ENCODE measurements at regions of chr1 and their contacts with region 1.

Region 1: DNA sequence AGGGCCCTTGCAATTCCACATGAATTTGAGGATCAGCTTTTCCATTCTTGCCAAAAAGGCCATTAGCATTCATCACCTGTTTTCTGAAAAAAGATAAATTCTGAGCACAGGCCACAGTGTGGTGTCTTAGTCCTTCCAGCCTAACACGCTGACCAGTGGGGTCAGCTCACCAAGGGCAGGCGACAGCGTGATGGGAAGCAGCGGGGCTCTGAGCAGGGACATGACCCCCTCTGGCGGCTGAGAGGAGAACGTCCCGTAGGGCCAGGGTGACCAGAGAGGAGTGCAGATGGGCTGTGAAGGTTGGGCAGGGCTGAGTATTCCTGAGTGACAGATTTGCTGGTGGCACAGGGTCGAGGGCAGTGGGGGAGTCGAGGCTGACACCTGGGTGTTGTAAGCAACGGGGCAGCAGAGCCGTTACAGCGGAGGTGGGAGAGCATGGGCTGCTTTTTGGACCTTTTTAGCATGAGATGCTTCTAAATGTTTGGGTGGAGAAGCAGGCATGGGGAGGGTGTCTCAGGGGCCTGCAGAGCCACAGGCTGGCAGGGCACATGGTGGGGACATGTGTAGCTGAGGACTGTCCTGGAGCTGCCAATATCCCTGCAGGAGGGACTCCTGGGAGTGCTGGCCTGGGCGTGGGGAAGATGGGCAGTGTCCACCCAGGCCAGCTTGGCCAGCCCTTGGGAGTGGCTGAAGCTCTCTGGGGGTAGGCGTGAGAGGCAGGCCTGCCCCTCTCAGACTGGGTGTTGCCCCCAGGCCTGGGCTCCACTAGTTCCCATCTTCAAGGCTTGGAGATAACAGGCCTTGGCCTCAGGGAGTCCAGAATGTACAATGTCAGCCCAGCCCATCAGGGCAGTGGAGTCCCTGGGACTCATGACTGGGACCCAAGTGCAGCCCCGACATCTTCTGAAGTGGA is 8.6 kb upstream of the CALML6 start:
- DNase-seq: peak; percentile 47 to 65 (median 58)
- H3K4me3 ChIP-seq: no peak overlapping the region
- H3K27ac ChIP-seq: no peak overlapping the region
- H3K4me1 ChIP-seq: peaks cover 0 to 35% (median 28%) of the 10 kb centered on the region in 4 experiments
- H3K27me3 ChIP-seq: no peaks in the 10 kb centered on the region

Region 2: GRCh38 chr1:1788646-1789431 is 117.6 kb before region 1 on chr1:
- CTCF ChIA-PET with region 1: interaction called, 15 read pairs
- POLR2A ChIA-PET with region 1: no interaction called
- DNase-seq: peak; percentile 32 to 55 (median 43)
- H3K4me3 ChIP-seq: no peak overlapping the region
- H3K27ac ChIP-seq: no peak overlapping the region
- H3K4me1 ChIP-seq: no peaks in the 10 kb centered on the region
- H3K27me3 ChIP-seq: no peaks in the 10 kb centered on the region

Region 3: DNA sequence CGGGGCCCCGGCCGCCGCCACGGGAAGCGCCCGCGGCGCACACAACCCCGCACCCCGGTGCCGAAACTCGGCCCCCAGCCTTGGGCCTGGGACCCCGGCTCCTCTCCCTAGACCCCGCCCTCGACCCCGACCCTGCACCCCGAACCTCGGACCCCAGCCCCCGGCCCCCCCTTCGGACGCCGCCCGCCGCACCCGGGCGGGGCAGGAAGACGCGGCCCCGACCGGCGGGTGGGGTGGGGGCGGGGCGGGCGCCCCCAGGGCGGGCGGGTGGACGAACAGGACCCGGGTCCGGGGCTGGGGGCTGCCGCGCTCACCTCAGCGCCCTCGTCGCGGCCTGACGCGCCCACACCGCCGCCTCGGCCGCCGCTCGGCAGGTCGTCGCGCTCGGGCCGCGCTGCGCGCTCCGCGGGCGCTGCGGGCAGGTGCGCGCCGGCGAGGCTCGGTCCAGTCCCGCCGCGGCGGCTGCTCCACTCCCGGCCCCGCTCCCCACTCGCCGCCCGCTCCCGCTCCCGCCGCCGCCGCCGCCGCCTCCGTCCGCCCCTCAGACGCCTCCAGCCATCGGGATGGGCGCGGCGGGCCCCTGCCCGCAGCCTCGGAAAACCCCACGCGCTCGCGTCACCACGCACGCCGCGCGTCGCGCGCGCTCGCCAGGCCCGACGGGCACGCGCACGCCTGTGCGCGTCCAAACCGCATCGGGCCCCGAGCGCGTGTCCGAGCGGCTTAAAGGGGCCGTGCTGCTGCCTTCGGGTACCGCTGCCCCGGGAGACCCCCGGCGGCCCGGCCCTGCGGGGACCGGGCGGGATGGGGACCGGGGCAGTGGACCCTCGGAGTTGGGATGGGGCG is 15.7 kb before region 1 on chr1 and contains the start of gene GNB1:
- CTCF ChIA-PET with region 1: interaction called, 110 read pairs
- POLR2A ChIA-PET with region 1: interaction called, 10 read pairs
- DNase-seq: peak; percentile 87 to 96 (median 94)
- H3K4me3 ChIP-seq: peak within 1 kb of the TSS; percentile 72 to 92 (median 84)
- H3K27ac ChIP-seq: peak within 1 kb of the TSS; percentile 84 to 96
- H3K4me1 ChIP-seq: peaks cover 19 to 64% (median 50%) of the 10 kb centered on the region in 4 experiments
- H3K27me3 ChIP-seq: no peaks in the 10 kb centered on the region